ENCODE measurements at regions of chr18 and their contacts with region 1.

Region 1: DNA sequence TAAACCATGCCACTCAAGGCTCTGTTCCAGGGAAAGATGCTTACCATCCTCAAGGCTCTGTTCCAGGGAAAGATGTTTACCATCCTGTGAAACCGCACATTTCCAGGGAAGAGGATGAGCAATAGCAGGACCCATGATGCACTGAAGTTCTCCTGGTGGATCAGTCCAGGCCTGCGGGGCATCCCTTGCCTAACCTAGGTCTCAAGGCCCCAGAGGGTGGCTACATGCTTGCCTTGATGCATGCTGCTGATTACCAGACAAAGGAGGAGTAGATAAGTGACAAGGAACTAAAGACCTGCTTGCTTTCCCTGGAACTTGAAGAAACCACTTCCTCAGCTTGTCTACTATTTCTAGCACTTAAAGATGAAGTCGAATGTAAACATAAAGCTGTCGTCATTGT is 111.0 kb upstream of the LINC00305 start:
- DNase-seq: no peak
- H3K4me3 ChIP-seq: no peak overlapping the region
- H3K27ac ChIP-seq: no peak overlapping the region
- H3K4me1 ChIP-seq: no peaks in the 10 kb centered on the region
- H3K27me3 ChIP-seq: no peaks in the 10 kb centered on the region
- CTCF ChIP-seq: no peak
- POLR2A ChIP-seq: no peak

Region 2: DNA sequence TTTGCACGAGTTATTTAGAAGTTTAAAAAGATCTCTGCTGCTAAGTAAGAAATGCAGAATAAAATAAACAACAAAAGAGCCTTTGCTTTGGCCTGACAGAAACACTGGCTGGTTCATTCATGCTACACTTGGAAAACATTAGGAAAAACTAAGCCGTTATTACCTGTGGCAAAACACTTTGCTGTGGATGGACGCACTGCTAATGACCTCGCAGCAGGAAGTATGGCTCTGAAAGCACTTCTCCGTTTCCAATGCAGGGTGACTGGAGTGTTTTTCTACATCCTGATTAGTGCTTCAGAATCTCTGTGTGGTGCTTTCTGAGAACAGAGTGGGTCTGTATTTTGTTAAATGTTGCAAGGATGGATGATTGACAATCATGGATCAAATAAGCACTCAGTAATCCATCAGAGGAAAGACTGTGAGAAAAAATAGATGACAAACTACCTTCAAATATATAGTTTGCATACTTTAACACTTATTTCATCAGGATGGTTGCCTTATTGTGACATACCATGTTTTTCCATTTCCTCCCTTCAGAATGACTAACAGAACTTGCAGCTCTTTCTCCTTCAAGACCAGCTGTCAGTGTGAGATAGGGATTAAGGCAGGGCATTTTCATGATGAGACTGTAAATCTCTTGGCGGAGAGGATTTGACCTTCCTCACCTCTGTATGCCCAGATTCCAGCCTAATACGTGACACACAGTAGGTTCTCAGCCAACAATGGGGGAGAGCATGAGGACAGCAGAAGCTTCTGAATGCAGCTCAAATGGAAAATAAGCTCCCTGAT is 149.0 kb before region 1 on chr18:
- intact Hi-C with region 1: no loop called
- DNase-seq: peak; percentile 8 to 30
- H3K4me3 ChIP-seq: no peak overlapping the region
- H3K27ac ChIP-seq: no peak overlapping the region
- H3K4me1 ChIP-seq: no peaks in the 10 kb centered on the region
- H3K27me3 ChIP-seq: no peaks in the 10 kb centered on the region
- CTCF ChIP-seq: no peak
- POLR2A ChIP-seq: no peak

Region 3: DNA sequence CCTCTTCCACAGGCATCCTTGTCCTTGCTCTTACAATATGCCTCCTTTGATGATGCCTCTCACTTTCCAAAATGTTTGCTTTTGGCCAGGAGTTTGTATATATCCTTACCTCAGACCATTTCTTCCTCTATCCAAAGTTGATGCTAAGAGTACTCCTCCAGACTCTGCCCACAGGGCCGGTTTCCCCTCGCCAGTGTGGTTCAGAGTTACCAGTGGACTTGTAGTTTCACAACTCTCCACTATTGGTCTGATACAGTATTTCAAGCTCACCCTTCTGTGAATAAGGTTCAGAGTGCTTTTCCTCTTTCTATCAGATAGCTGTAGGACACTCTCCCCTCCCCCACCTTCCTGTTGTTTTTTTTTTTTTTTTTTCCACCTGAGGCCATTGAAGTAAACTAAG is 68.8 kb before region 1 on chr18:
- intact Hi-C with region 1: loop called (anchors 10 kb)
- DNase-seq: no peak
- H3K4me3 ChIP-seq: no peak overlapping the region
- H3K27ac ChIP-seq: no peak overlapping the region
- H3K4me1 ChIP-seq: no peaks in the 10 kb centered on the region
- H3K27me3 ChIP-seq: no peaks in the 10 kb centered on the region
- CTCF ChIP-seq: no peak
- POLR2A ChIP-seq: no peak

Region 4: GRCh38 chr18:64219517-64219916 is 40.4 kb before region 1 on chr18:
- intact Hi-C with region 1: no loop called
- DNase-seq: no peak
- H3K4me3 ChIP-seq: no peak overlapping the region
- H3K27ac ChIP-seq: no peak overlapping the region
- H3K4me1 ChIP-seq: no peaks in the 10 kb centered on the region
- H3K27me3 ChIP-seq: no peaks in the 10 kb centered on the region
- CTCF ChIP-seq: no peak
- POLR2A ChIP-seq: no peak